Right lobe of liver (tissue), 6 donors: ENCODE measurements at regions of chr15 and their contacts with region 1.

Region 1: GRCh38 chr15:84961114-84961452 is 20.6 kb upstream of the PDE8A start:
- DNase-seq: no peak
- ATAC-seq: no peak
- H3K4me3 ChIP-seq: no peak overlapping the region
- H3K27ac ChIP-seq: no peak overlapping the region
- H3K4me1 ChIP-seq: no peaks in the 10 kb centered on the region
- H3K27me3 ChIP-seq: no peaks in the 10 kb centered on the region
- CTCF ChIP-seq: no peak
- POLR2A ChIP-seq: no peak

Region 2: GRCh38 chr15:85044251-85044853 is 83.3 kb after region 1 on chr15:
- intact Hi-C with region 1: loop called (anchors 10 kb)
- DNase-seq: peak in 1 of 3 donors; percentile 62
- ATAC-seq: peak; percentile 85 to 93 (median 88)
- H3K4me3 ChIP-seq: no peak overlapping the region
- H3K27ac ChIP-seq: peak overlapping the region in 1 of 3 donors; percentile 16
- H3K4me1 ChIP-seq: peaks cover 0 to 21% (median 5%) of the 10 kb centered on the region in 4 donors
- H3K27me3 ChIP-seq: no peaks in the 10 kb centered on the region
- CTCF ChIP-seq: peak; percentile 63 to 71 (median 68)
- POLR2A ChIP-seq: no peak